ENCODE measurements at regions of chr12 and their contacts with region 1.

Region 1: GRCh38 chr12:13211859-13212664 is 15.5 kb downstream of the EMP1 start:
- DNase-seq: peak; percentile 73 to 78 (median 76)
- H3K4me3 ChIP-seq: no peak overlapping the region
- H3K4me3 Mint-ChIP-seq: peak overlapping the region; percentile 12 to 80 (median 47)
- H3K27ac ChIP-seq: no peak overlapping the region
- H3K27ac Mint-ChIP-seq: peak overlapping the region in 6 of 7 donors; percentile 19 to 91 (median 79)
- H3K4me1 ChIP-seq: peaks cover 10% of the 10 kb centered on the region
- H3K4me1 Mint-ChIP-seq: peaks cover 5 to 13% (median 7%) of the 10 kb centered on the region in 4 donors
- H3K27me3 ChIP-seq: no peaks in the 10 kb centered on the region
- H3K27me3 Mint-ChIP-seq: no peaks in the 10 kb centered on the region

Region 2: DNA sequence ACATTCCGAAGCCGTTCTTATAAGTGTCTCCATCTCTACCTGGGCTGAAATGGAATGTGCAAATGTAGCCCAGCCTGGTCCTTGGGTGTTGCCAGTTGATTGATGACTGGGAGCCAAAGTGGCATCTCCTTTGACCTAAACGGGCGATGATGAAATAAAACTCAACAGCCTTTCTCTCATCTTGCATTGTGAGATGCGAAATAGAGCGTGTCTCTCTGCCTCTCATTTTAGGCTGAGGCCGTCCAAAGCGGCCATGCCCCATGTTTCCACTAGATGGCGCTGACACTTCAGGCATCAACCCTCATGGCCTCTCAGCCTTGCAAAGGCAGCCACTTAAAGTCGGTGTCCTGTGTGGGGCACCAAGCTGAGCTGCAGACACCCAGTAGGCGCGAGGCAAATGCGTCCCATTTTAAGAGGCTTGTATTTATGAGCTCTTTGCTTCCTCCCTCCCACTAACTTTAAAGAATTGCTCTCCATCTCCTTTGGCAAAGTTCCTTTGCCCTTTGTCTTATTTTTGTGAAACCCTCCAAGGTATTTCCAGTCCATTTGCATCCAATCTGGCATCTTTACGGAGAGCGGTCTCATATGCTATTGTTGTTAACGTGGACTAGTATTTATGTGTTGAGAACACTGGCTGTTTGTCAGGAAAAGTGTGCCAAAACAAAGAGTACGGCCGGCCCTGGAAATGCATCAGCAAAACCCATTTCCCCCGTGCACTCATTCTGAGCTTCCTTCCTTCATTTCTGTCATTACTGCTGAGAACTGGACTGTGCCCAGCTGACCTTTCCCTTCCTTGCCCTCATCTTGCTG is 295.7 kb before region 1 on chr12:
- CTCF ChIA-PET with region 1: interaction called, 179 read pairs
- POLR2A ChIA-PET with region 1: interaction called, 5 read pairs
- intact Hi-C with region 1: loop called (anchors 1 kb)
- DNase-seq: peak; percentile 76 to 82 (median 80)
- H3K4me3 ChIP-seq: no peak overlapping the region
- H3K4me3 Mint-ChIP-seq: peak overlapping the region in 1 of 8 donors; percentile 0
- H3K27ac ChIP-seq: no peak overlapping the region
- H3K27ac Mint-ChIP-seq: peak overlapping the region in 3 of 7 donors; percentile 9 to 36 (median 14)
- H3K4me1 ChIP-seq: peaks cover 5% of the 10 kb centered on the region
- H3K4me1 Mint-ChIP-seq: peaks cover 5 to 8% (median 7%) of the 10 kb centered on the region in 4 donors
- H3K27me3 ChIP-seq: no peaks in the 10 kb centered on the region
- H3K27me3 Mint-ChIP-seq: peaks cover 4 to 9% of the 10 kb centered on the region in 2 donors

Region 3: GRCh38 chr12:12999959-13000615 is 212.0 kb before region 1 on chr12 and contains the start of gene HEBP1:
- CTCF ChIA-PET with region 1: no interaction called
- POLR2A ChIA-PET with region 1: no interaction called
- intact Hi-C with region 1: loop called (anchors 5 kb)
- DNase-seq: peak; percentile 92 to 95 (median 93)
- H3K4me3 ChIP-seq: peak within 1 kb of the TSS; percentile 61 to 81
- H3K4me3 Mint-ChIP-seq: peak within 1 kb of the TSS; percentile 82 to 97 (median 90)
- H3K27ac ChIP-seq: peak within 1 kb of the TSS; percentile 64
- H3K27ac Mint-ChIP-seq: peak within 1 kb of the TSS; percentile 82 to 95 (median 90)
- H3K4me1 ChIP-seq: peaks cover 26% of the 10 kb centered on the region
- H3K4me1 Mint-ChIP-seq: peaks cover 20 to 44% (median 30%) of the 10 kb centered on the region in 4 donors
- H3K27me3 ChIP-seq: no peaks in the 10 kb centered on the region
- H3K27me3 Mint-ChIP-seq: no peaks in the 10 kb centered on the region
- total RNA-seq, gene HEBP1: 11.3 to 13.9 TPM

Region 4: DNA sequence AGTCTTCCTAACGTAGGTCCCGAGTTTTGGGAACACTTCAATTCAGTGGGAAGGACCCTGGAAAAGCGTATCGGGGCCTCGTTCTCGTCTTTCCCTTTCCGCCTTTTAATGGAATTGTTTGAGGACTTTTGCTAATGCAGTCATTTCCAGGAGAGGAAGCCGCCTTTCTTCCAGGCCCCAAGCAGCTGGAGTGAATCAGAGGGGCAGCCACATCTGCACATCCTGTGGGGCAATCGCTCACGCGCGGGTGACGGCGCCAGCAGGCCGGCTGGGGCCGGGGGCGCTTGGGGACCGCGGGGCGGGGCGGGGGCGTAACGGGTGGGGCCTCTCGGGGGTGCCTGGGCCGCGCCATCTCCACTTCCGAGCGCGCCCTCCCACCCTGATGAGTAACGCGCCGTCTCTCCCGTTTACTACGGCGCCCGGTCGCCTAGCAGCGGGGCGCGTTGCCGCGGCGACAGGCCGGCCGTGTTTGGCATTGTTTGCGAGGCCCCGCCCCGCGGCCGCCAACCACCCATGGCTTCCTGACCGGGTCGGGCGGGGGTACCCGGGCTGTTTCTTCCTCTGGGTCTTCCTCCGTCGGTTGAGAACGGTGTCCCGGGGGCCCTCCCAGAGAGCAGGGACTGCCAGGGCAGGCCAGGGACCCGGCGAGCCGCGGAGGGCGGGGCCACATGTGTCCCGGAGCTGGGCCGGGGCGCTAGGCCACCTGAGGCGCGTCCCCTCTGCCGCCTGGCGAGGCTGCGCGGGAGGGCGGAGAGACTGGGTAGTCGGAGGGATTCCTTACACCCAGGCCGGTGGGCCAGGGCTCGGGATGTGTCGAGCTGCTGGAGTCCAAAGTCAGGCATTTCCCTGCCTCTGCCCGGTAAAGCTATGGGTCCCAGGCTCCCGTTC is 110.9 kb before region 1 on chr12:
- CTCF ChIA-PET with region 1: interaction called, 213 read pairs
- POLR2A ChIA-PET with region 1: interaction called, 52 read pairs
- intact Hi-C with region 1: loop called (anchors 1 kb)
- DNase-seq: peak; percentile 95 to 97 (median 96)
- H3K4me3 ChIP-seq: peak overlapping the region; percentile 44 to 69
- H3K4me3 Mint-ChIP-seq: peak overlapping the region; percentile 85 to 93 (median 88)
- H3K27ac ChIP-seq: peak overlapping the region; percentile 93
- H3K27ac Mint-ChIP-seq: peak overlapping the region; percentile 93 to 99 (median 99)
- H3K4me1 ChIP-seq: peaks cover 40% of the 10 kb centered on the region
- H3K4me1 Mint-ChIP-seq: peaks cover 38 to 58% (median 45%) of the 10 kb centered on the region in 4 donors
- H3K27me3 ChIP-seq: no peaks in the 10 kb centered on the region
- H3K27me3 Mint-ChIP-seq: no peaks in the 10 kb centered on the region

Region 5: DNA sequence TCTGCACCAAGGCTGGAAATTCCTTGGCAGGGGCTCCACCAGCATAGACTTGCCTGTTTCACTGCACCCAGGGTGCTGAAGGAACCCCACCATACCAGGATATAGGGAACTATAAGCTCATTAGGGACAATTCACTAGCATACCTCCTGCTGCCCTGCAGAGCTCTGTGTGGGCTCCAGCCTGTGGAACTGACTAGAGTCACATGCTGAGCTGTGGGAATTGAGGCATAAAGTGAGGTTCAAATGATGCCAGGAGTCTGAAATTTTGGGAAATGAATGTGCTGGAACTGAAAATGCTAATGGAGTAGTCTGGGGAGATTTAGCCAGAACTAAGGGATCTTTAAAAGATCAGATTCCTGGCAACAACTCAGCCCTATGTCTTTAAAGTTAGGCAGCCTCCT is 22.8 kb before region 1 on chr12:
- CTCF ChIA-PET with region 1: interaction called, 13 read pairs
- POLR2A ChIA-PET with region 1: no interaction called
- intact Hi-C with region 1: no loop called
- DNase-seq: no peak
- H3K4me3 ChIP-seq: no peak overlapping the region
- H3K4me3 Mint-ChIP-seq: no peak overlapping the region
- H3K27ac ChIP-seq: no peak overlapping the region
- H3K27ac Mint-ChIP-seq: no peak overlapping the region
- H3K4me1 ChIP-seq: no peaks in the 10 kb centered on the region
- H3K4me1 Mint-ChIP-seq: no peaks in the 10 kb centered on the region
- H3K27me3 ChIP-seq: no peaks in the 10 kb centered on the region
- H3K27me3 Mint-ChIP-seq: peaks cover 3 to 12% of the 10 kb centered on the region in 2 donors

Region 6: DNA sequence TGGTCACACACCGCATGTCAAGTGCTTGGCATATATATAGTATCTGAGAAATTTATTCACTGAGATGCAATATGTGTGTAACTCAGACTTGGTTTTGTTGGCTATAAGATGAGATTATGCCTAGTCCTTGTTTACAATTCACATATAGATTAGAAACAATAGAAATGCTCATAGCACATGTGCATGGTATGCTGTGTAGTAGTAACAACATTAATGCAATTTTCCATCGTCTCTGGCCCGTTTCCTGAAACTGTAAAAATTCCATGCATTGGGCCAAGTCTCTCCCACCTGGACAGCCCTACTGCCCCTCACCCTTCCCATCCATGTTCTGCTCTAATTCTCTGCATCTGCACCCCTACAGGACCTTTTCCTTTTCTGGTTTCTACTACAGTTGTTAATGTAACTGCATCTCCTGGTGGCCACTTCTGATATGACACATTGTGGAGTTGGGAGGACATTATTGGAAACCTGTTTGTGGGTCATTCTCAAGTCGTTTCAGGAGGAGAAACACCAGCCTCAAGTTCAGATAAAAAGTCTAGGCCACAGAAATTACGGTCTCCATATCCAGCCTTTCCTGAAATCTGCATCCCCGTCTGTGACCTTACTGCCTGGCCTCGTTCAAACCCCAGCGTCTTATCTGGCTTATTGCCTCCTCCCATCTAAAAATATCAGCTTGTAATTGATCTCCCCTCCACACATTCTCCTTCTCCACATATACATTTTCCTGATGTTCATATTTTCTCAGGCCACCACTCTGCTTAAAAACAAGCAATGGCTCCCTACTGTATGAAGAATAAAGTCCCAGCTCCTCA is 22.0 kb after region 1 on chr12:
- CTCF ChIA-PET with region 1: interaction called, 14 read pairs
- POLR2A ChIA-PET with region 1: no interaction called
- intact Hi-C with region 1: no loop called
- DNase-seq: peak; percentile 21 to 40 (median 27)
- H3K4me3 ChIP-seq: no peak overlapping the region
- H3K4me3 Mint-ChIP-seq: no peak overlapping the region
- H3K27ac ChIP-seq: no peak overlapping the region
- H3K27ac Mint-ChIP-seq: peak overlapping the region in 1 of 7 donors; percentile 63
- H3K4me1 ChIP-seq: no peaks in the 10 kb centered on the region
- H3K4me1 Mint-ChIP-seq: no peaks in the 10 kb centered on the region
- H3K27me3 ChIP-seq: no peaks in the 10 kb centered on the region
- H3K27me3 Mint-ChIP-seq: peaks cover 14 to 16% of the 10 kb centered on the region in 2 donors